GM10248 (cell line): ENCODE measurements at regions of chr1 and their contacts with region 1.

Region 1: GRCh38 chr1:36187800-36188593 is 32.0 kb downstream of the MAP7D1 start:
- DNase-seq: peak; percentile 84
- CTCF ChIP-seq: peak; percentile 94

Region 2: DNA sequence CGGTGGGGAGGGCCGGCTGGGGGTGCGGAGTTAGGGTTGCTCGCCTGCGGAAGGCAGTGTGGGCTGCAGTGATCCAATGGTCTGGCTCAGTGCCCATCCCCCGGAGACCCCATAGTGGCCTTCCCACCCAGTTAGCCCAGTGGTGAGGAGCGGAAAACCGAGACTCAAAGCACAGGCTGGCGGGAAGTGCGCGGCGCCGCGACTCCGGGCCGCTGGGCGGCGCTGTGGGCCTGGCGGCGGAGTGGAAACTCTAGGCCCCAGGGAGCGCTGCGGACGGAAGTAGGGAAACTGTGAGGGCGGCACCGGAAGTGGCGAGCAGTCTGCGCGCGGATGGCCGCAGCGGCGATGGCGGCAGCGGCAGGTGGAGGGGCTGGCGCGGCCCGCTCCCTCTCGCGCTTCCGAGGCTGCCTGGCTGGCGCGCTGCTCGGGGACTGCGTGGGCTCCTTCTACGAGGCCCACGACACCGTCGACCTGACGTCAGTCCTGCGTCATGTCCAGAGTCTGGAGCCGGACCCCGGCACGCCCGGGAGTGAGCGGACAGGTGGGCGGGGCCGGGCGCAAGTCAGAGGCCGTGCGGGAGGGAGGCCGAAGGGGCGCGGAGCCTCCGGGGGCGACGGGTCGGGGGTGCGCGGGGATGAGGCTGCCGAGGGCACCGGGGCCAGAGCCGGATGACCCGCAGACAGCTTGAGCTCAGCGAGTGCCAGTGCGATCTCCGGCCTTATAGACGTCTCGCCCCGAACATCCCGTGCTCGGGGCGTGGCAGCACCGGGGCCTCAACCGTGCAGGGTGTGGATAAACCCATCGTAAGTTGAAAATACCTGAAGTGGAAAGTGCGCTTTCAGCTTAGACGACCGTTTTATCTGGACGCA is 99.2 kb before region 1 on chr1 and contains the start of gene ADPRS:
- CTCF ChIA-PET with region 1: interaction called, 11 read pairs
- POLR2A ChIA-PET with region 1: no interaction called
- DNase-seq: peak; percentile 94
- CTCF ChIP-seq: peak; percentile 98

Region 3: GRCh38 chr1:36128126-36128904 is 59.7 kb before region 1 on chr1:
- CTCF ChIA-PET with region 1: interaction called, 17 read pairs
- POLR2A ChIA-PET with region 1: no interaction called
- DNase-seq: no peak
- CTCF ChIP-seq: no peak

Region 4: DNA sequence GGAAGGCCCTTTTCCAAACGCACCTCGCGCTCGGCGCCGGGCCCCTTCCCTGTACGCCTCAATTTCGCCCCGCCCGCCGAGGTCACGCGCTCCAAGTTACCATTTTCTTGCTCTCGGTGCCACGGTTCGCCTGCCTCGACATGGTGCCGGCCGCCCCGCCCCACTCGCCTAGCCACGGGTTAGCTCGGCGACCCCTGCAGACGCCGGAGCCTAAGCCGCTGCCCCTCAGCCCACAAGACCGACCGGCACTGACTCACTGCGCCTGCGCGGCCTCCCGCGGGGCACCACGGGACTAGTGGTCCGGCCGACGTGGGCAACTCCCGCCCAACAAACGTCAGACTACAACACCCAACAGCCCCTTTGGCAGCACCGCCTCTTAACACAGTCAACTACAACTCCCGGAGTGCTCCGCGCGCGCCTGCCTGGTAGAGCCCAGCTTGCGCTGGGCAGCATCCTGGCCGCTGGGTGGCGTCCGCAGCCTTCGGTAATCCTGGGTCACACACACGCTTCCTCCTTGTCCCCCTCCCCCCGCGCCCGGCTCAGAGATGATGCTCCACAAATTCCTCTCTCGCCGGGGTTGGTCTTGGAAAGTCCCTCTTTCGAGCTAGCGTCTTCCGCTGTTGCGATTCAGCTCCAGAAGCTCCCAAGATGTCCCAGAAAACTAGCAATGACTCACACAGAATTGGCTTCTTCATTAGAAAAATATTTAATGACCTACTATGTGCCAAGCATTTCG is 38.6 kb before region 1 on chr1 and contains the start of gene TRAPPC3:
- CTCF ChIA-PET with region 1: interaction called, 123 read pairs
- POLR2A ChIA-PET with region 1: interaction called, 5 read pairs
- DNase-seq: peak; percentile 98
- CTCF ChIP-seq: peak; percentile 99

Region 5: GRCh38 chr1:36172983-36173382 is 15.0 kb before region 1 on chr1:
- CTCF ChIA-PET with region 1: interaction called, 27 read pairs
- POLR2A ChIA-PET with region 1: no interaction called
- DNase-seq: no peak
- CTCF ChIP-seq: no peak

Region 6: GRCh38 chr1:36223993-36224536 is 36.1 kb after region 1 on chr1 and contains the start of gene THRAP3:
- CTCF ChIA-PET with region 1: interaction called, 19 read pairs
- POLR2A ChIA-PET with region 1: no interaction called
- DNase-seq: peak; percentile 97
- CTCF ChIP-seq: no peak